CD8-positive, alpha-beta T cell (primary cell): ENCODE measurements at regions of chr6 and their contacts with region 1.

Region 1: DNA sequence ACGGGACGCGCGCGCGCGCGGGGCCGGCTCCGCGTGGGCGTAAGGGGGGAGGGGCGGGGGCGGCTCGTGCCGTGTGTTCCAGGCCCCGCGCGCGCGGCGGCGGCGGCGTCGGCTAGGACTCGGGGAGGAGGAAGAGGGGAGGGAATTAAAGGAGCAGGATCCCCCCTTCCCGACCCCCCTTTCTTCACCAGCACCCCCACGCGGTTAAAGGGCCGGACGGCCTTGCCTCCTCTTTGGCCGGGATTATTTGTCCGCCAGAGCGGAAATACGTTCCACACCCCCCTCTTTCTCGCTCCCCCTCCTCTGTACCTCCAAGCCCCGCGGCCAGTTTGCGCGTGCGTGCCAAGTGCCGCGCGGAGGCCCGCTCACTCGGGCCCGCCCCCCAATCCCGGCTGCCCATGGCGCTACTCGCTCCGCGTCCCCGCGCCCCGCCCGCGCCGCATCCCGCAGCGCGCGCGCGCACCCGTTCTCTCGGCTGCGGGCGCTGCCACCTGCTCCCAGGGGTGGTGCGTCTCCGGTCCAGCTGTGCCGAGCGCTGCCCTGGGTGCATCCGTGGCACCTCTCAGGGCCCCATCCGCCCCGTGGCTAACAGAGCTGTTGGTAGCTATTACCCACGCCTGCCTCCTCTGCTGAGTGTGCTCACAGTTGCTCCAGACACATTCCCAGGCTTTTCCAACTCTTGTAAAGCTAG is at the start of gene ZBTB12:
- DNase-seq: peak; percentile 68 to 94 (median 84)
- ATAC-seq: peak; percentile 54
- H3K4me3 ChIP-seq: peak within 1 kb of the TSS; percentile 70 to 97
- H3K4me3 Mint-ChIP-seq: peak within 1 kb of the TSS; percentile 89
- H3K27ac ChIP-seq: peak within 1 kb of the TSS; percentile 47 to 76
- H3K27ac Mint-ChIP-seq: peak within 1 kb of the TSS; percentile 77
- H3K4me1 ChIP-seq: peaks cover 30% of the 10 kb centered on the region
- H3K4me1 Mint-ChIP-seq: peaks cover 32% of the 10 kb centered on the region
- H3K27me3 ChIP-seq: no peaks in the 10 kb centered on the region
- H3K27me3 Mint-ChIP-seq: no peaks in the 10 kb centered on the region
- CTCF ChIP-seq: no peak
- total RNA-seq, gene ZBTB12: 0.27 TPM in 1 of 2 experiments, not detected in the other

Region 2: DNA sequence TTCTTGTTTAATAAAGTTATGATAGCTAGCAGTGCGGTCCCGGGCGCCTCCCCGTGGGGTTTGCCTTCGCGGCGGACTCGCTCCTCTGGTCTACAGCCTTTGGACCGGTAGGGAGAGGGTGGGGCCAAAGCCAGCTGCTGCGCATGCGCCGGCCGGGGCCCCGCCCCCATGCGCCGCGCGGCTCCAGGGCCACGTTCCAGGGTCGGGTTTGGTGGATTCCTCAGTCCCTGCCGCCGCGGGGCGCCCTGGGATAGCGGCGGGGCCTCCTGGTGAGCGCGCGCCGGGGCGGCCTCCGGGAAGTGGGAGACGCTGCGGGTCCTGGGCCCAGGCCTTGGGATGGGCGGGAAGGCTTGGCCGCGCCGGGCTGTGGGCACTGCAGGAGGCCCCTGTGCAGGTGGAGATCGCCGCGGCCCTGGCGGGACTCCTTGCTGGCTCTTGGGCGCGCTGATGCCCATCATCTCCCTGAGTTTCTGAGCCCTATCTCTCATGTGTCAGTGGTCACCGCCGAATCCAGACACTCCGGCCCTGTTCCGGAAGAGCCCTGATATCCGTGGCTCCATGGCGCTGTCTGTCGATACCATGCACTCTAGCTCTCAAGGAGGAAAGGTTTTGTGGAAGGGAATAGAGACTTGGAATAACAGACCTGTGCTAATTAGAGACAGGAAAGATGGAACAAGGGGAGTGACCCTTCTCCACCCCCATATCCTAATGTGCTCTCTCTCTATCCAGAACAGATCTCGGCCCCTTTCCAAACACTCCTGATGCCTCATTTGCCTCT is 987.8 kb before region 1 on chr6 and contains the start of gene VARS2:
- CTCF ChIA-PET with region 1: no interaction called
- POLR2A ChIA-PET with region 1: no interaction called
- intact Hi-C with region 1: loop called in 1 of 2 experiments (anchors 5 kb)
- DNase-seq: peak; percentile 66 to 92 (median 82)
- ATAC-seq: peak; percentile 96
- H3K4me3 ChIP-seq: peak within 1 kb of the TSS; percentile 61 to 92
- H3K4me3 Mint-ChIP-seq: peak within 1 kb of the TSS; percentile 93
- H3K27ac ChIP-seq: peak within 1 kb of the TSS; percentile 48 to 65
- H3K27ac Mint-ChIP-seq: peak within 1 kb of the TSS; percentile 88
- H3K4me1 ChIP-seq: peaks cover 15% of the 10 kb centered on the region
- H3K4me1 Mint-ChIP-seq: peaks cover 29% of the 10 kb centered on the region
- H3K27me3 ChIP-seq: no peaks in the 10 kb centered on the region
- H3K27me3 Mint-ChIP-seq: no peaks in the 10 kb centered on the region
- CTCF ChIP-seq: no peak
- total RNA-seq, gene VARS2: 19.5 to 20.6 TPM

Region 3: GRCh38 chr6:31619805-31620585 is 282.1 kb before region 1 on chr6:
- CTCF ChIA-PET with region 1: no interaction called
- POLR2A ChIA-PET with region 1: interaction called, 3 read pairs
- intact Hi-C with region 1: loop called in 1 of 2 experiments (anchors 1 kb)
- DNase-seq: peak; percentile 94 to 99 (median 96)
- ATAC-seq: peak; percentile 80
- H3K4me3 ChIP-seq: peak overlapping the region; percentile 83 to 96
- H3K4me3 Mint-ChIP-seq: peak overlapping the region; percentile 91
- H3K27ac ChIP-seq: peak overlapping the region; percentile 95 to 99
- H3K27ac Mint-ChIP-seq: peak overlapping the region; percentile 96
- H3K4me1 ChIP-seq: peaks cover 37% of the 10 kb centered on the region
- H3K4me1 Mint-ChIP-seq: peaks cover 52% of the 10 kb centered on the region
- H3K27me3 ChIP-seq: no peaks in the 10 kb centered on the region
- H3K27me3 Mint-ChIP-seq: no peaks in the 10 kb centered on the region
- CTCF ChIP-seq: no peak

Region 4: GRCh38 chr6:31665501-31666336 is 236.4 kb before region 1 on chr6 and contains the start of gene CSNK2B:
- CTCF ChIA-PET with region 1: no interaction called
- POLR2A ChIA-PET with region 1: interaction called, 3 read pairs
- intact Hi-C with region 1: loop called (anchors 1 to 2 kb)
- DNase-seq: peak; percentile 95 to 99 (median 98)
- ATAC-seq: peak; percentile 84
- H3K4me3 ChIP-seq: peak within 1 kb of the TSS; percentile 91 to 94
- H3K4me3 Mint-ChIP-seq: peak within 1 kb of the TSS; percentile 95
- H3K27ac ChIP-seq: peak within 1 kb of the TSS; percentile 96 to 99
- H3K27ac Mint-ChIP-seq: peak within 1 kb of the TSS; percentile 98
- H3K4me1 ChIP-seq: peaks cover 44% of the 10 kb centered on the region
- H3K4me1 Mint-ChIP-seq: peaks cover 56% of the 10 kb centered on the region
- H3K27me3 ChIP-seq: no peaks in the 10 kb centered on the region
- H3K27me3 Mint-ChIP-seq: no peaks in the 10 kb centered on the region
- CTCF ChIP-seq: no peak
- total RNA-seq, gene CSNK2B: 80.9 to 86.1 TPM

Region 5: DNA sequence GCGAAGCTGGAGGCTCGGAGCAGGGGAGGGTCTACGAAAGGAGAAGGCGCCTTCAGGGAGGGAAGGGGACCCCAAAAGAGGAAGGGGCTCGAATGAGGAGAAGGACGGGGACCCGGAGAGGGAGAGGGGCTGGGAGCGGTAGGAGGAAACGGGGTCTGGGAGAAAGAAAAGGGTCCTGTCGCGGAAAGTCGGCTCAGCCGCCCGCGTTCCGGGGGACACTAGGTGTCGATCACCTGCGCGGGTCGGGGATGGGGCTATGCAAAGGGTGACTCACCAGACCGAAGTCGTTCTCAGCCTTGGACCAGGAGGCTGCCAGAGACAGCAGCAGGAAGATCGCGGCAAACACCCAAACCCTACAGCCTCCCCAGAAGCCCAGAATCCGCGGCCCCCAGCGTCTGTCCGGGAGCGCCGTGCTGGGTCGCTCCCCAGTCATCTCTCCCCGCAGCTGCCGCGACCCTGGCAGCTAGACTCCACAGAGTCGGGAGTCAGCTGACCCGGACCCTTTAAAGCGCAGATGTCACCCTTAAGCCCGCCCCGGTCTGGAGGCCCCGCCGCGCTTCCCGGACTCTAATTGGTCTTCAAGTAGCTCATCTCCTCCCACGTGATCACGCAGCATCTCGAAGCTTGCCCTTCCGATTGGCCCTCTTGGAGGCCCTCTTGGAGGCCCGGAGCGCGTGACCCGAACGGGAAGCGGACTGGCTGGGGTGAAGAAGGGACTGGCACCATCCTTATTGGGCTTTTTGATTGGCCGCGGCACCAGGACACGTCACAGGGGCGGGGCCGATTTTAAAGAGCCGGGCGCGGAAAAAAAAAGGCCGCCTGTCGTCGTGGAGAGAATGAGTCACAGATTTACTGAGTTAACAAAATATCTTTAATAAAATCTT is 39.5 kb before region 1 on chr6 and contains the start of gene NEU1:
- CTCF ChIA-PET with region 1: interaction called, 5 read pairs
- POLR2A ChIA-PET with region 1: interaction called, 5 read pairs
- intact Hi-C with region 1: loop called (anchors 1 kb)
- DNase-seq: peak; percentile 97 to 100 (median 98)
- ATAC-seq: peak; percentile 91
- H3K4me3 ChIP-seq: peak within 1 kb of the TSS; percentile 75 to 94
- H3K4me3 Mint-ChIP-seq: peak within 1 kb of the TSS; percentile 95
- H3K27ac ChIP-seq: peak within 1 kb of the TSS; percentile 77 to 97
- H3K27ac Mint-ChIP-seq: peak within 1 kb of the TSS; percentile 98
- H3K4me1 ChIP-seq: peaks cover 17% of the 10 kb centered on the region
- H3K4me1 Mint-ChIP-seq: peaks cover 23% of the 10 kb centered on the region
- H3K27me3 ChIP-seq: no peaks in the 10 kb centered on the region
- H3K27me3 Mint-ChIP-seq: no peaks in the 10 kb centered on the region
- CTCF ChIP-seq: no peak
- total RNA-seq, gene NEU1: 30.0 to 30.2 TPM

Region 6: GRCh38 chr6:32127717-32128592 is 225.9 kb after region 1 on chr6 and contains the start of gene ATF6B:
- CTCF ChIA-PET with region 1: no interaction called
- POLR2A ChIA-PET with region 1: no interaction called
- intact Hi-C with region 1: loop called in 1 of 2 experiments (anchors 2 kb)
- DNase-seq: peak; percentile 90 to 100 (median 95)
- ATAC-seq: peak; percentile 94
- H3K4me3 ChIP-seq: peak within 1 kb of the TSS; percentile 81 to 88
- H3K4me3 Mint-ChIP-seq: peak within 1 kb of the TSS; percentile 99
- H3K27ac ChIP-seq: peak within 1 kb of the TSS; percentile 76 to 83
- H3K27ac Mint-ChIP-seq: peak within 1 kb of the TSS; percentile 97
- H3K4me1 ChIP-seq: peaks cover 31% of the 10 kb centered on the region
- H3K4me1 Mint-ChIP-seq: peaks cover 47% of the 10 kb centered on the region
- H3K27me3 ChIP-seq: no peaks in the 10 kb centered on the region
- H3K27me3 Mint-ChIP-seq: no peaks in the 10 kb centered on the region
- CTCF ChIP-seq: no peak
- total RNA-seq, gene ATF6B: 69.3 to 72.5 TPM